ENCODE measurements at regions of chr19 and their contacts with region 1.

Region 1: GRCh38 chr19:35352448-35353304 is 5.0 kb downstream of the FFAR1 start:
- DNase-seq: peak; percentile 51
- H3K4me3 Mint-ChIP-seq: no peak overlapping the region
- H3K27ac Mint-ChIP-seq: peak overlapping the region; percentile 33
- H3K4me1 Mint-ChIP-seq: peaks cover 15% of the 10 kb centered on the region
- H3K27me3 Mint-ChIP-seq: no peaks in the 10 kb centered on the region

Region 2: DNA sequence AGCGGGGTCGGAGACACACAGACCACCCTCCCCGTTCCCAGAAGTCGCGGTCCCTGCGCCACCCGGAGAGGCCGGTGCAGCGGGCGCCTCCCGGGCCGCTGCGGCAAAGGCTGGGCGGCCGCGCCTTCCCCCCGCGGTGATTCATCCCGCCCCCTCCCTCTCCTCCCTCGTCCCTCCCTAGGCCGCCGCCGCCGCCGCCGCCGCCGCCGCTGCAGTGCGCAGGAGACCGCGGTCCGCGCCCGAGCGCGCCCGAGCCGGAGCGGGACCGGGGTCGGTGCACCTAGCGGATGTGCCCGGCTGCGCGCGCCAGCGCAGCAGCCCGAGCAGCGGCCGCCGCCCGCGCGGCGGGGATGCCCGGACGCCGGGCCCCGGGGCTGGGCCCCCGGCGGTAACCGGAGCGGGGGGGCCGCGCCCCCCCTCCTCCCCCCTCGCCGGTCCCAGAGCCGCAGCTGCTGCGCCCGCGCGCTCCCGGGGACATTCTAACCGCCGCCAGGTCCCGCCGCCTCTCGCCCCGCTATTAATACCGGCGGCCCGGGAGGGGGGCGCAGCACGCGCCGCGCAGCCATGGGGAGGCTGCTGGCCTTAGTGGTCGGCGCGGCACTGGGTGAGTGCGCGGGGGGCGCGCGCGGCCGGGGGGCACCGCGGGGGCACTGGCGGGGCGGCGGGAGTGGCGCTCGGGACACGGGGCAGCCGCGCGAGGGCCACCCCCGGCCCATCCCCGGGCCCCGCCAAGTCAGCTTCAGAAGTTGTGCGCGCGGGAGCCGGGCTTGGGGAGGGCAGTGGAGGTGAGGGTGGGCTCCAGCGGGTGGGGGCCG is 322.2 kb before region 1 on chr19 and contains the start of gene SCN1B:
- intact Hi-C with region 1: no loop called
- DNase-seq: peak; percentile 43
- H3K4me3 Mint-ChIP-seq: peak within 1 kb of the TSS; percentile 64
- H3K27ac Mint-ChIP-seq: peak within 1 kb of the TSS; percentile 1
- H3K4me1 Mint-ChIP-seq: peaks cover 5% of the 10 kb centered on the region
- H3K27me3 Mint-ChIP-seq: peaks cover 18% of the 10 kb centered on the region
- total RNA-seq, gene SCN1B: 2.7 and 3.6 TPM in 2 replicates

Region 3: DNA sequence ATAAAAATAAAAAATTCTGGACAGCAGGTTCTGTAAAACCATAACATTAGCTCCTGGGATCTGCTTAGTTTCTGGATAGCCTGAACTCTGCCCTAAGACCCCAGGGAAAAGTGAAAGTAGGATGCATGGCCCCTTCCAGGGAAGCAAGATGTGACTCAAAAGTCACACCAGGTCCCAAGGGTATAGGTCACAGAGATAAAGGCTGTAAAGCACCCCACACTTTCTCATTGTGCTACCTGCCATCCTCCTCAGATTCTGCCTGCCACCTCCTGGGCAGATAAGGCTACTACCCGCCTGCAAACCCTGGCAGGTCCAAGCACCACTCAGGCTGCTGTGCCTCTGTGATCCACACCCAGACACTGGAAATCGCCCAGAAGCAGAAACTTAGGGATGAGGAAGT is 116.0 kb after region 1 on chr19:
- intact Hi-C with region 1: loop called (anchors 1 kb)
- DNase-seq: peak; percentile 47
- H3K4me3 Mint-ChIP-seq: no peak overlapping the region
- H3K27ac Mint-ChIP-seq: no peak overlapping the region
- H3K4me1 Mint-ChIP-seq: peaks cover 14% of the 10 kb centered on the region
- H3K27me3 Mint-ChIP-seq: peaks cover 4% of the 10 kb centered on the region

Region 4: DNA sequence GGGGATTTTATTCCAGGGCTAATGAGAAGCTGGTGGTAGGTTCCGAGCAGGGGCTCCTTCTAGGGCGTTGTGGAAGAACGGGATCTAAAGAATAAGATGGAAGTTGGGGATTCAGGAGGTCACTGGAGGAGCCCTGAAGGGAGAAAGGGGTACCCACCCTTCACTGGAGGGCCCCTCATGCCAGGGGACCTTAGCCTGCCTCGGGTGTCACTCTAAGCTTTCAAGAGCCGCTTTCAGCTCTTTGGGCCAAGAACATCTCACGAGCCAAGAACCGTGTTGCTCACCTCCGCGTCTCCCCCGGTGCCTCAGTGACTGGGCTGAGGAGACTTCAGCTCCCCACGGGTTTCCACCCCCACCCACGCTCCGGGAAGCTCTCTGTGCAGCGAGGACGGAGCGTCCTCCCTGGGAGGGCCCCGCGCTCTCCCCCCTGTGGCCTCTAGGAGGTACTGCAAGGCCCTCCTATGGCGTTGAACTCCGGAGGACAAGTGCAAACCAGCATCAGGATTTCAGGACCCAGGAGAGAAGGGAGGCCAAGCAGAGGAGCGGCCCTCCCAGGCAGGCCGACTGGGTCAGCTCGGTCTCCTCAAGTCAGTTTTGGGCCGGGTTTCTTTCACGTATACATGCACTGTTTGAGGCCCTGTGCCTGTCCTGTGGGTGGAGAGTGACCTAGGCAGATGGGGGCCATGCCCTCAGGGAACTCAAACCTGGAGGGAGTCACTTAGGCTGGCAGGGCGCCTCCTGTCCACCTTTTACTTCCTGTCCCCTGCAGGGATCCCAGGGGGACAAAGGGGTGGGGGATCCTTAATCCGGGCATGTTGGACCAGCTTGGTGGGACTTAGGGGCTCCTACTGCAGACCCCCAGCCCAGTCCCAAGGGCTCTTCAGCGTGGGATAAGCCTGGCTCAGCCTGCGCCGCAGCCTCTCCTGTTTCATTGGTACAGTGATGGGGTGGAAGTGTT is 142.7 kb after region 1 on chr19:
- intact Hi-C with region 1: loop called (anchors 1 kb)
- DNase-seq: peak; percentile 50
- H3K4me3 Mint-ChIP-seq: no peak overlapping the region
- H3K27ac Mint-ChIP-seq: no peak overlapping the region
- H3K4me1 Mint-ChIP-seq: peaks cover 7% of the 10 kb centered on the region
- H3K27me3 Mint-ChIP-seq: peaks cover 17% of the 10 kb centered on the region